ENCODE measurements at regions of chr15 and their contacts with region 1.

Region 1: DNA sequence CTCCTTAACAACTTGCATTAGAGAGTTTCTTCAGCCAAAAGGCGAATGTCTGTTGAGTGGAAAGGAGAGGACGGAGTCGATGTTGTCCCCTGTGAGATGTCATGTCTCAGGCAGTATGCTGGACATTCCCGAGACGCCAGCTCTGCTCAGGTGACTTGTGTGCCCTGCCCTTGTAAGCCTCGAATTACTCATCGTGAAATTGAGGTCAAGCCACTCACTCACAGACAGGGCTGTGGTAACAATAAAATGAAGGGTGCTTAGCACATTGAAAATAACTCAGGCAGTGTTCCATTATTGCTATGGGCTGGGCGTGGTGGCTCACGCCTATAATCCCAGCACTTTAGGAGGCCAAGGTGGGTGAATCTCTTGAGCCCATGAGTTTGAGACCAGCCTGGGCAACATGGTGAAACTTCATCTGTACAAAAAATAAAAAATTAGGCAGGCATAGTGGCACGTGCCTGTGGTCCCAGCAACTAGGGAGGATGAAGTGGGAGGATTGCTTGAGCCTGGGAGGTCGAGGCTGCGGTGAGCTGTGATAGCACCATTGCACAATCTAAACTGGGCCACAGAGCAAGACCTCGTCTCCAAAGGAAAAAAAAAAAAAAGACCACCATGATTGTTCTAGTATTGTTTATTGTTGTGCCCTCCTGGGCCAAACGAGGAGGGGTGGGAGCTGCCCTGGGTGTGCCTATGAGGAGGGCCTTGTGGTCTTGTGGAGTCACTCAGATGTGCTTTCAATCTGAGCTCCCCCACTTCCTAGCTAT is 214.4 kb downstream of the THSD4 start:
- DNase-seq: peak in 1 of 2 donors; percentile 57
- ATAC-seq: peak; percentile 80
- H3K4me3 ChIP-seq: no peak overlapping the region
- H3K27ac ChIP-seq: peak overlapping the region; percentile 98
- H3K4me1 ChIP-seq: peaks cover 5 to 14% of the 10 kb centered on the region in 2 donors
- H3K27me3 ChIP-seq: no peaks in the 10 kb centered on the region

Region 2: GRCh38 chr15:71125831-71126453 is 203.7 kb before region 1 on chr15:
- intact Hi-C with region 1: loop called in 1 of 2 experiments (anchors 5 kb)
- DNase-seq: no peak
- ATAC-seq: peak; percentile 62
- H3K4me3 ChIP-seq: no peak overlapping the region
- H3K27ac ChIP-seq: peak overlapping the region; percentile 89 to 96
- H3K4me1 ChIP-seq: peaks cover 0 to 4% of the 10 kb centered on the region in 2 donors
- H3K27me3 ChIP-seq: no peaks in the 10 kb centered on the region

Region 3: GRCh38 chr15:71278989-71279756 is 50.5 kb before region 1 on chr15:
- intact Hi-C with region 1: loop called (anchors 5 kb)
- DNase-seq: peak; percentile 77 to 85
- ATAC-seq: peak; percentile 83
- H3K4me3 ChIP-seq: no peak overlapping the region
- H3K27ac ChIP-seq: peak overlapping the region; percentile 72 to 89
- H3K4me1 ChIP-seq: peaks cover 5 to 14% of the 10 kb centered on the region in 2 donors
- H3K27me3 ChIP-seq: no peaks in the 10 kb centered on the region